ENCODE measurements at regions of chr2 and their contacts with region 1.

Region 1: DNA sequence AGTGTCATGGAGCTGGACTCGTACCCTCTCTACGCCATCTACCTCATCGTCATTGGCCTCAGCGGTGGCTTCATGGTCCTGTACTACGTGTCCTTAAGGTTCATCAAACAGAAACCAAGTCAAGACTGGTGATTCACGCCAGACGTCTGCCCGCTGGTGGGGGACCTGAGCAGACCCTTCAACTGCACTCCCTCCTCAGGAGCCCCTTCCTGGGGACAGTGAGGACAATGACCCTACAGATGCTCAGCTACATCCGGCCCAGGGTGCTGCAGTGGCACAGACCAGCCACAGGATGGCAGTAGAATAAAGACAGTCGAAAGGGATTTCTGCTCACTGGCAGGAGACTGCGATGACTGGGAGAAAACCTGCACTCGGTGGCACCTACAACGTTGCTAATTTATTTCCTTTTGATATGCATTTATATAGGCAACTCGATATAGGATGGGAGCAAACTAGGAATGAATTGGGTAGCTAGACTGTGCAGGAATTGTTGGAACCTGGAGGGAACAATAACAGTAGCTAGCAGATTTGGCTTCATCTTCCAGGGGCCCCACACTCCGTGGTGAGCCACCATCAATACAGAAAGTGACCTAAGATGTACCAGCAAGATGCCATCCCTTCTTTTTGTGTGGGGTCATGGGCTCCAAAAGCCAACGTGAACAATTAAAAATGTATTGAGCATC is 39.2 kb downstream of the ABCG8 start:
- DNase-seq: no peak
- H3K4me3 ChIP-seq: no peak overlapping the region
- CTCF ChIP-seq: peak; percentile 85

Region 2: DNA sequence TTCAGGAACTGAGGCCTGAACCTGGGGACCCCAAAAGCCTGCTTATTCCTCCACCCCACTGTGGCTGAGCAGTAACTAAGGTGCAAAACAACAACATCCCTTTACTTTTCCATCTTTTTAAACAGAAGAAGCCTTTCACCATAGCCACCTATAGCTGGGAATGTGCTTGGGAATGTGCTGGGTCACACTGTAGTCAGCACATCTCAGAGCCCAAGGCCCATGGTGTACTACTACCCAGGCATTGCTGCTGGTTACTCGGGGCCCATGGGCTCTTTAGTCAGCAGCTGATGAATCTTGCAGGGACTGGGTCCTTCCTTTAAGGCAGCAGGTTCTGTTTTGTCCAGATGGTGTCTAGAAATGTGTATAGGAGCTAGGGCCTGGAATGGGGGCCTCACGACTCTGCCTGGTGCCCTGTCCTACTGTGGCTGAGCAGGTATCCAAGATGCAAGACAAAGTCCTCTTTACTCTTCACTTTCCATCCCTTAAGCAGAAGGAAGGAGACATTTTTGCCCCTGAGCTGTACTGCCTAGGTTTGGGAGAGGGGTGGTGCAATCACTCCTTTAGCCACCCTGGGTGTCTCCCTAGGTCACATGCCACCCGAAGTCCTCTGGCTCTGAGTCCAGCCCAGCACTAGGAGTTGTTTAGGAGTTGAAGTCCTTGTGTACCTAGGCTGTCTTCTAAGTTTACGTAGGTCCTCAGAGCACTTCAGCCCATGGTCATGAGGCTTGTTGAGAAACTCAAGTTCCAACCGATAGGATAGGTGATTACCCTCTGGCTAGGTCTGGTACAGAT is 1184.0 kb before region 1 on chr2:
- CTCF ChIA-PET with region 1: no interaction called
- POLR2A ChIA-PET with region 1: no interaction called
- DNase-seq: no peak
- H3K4me3 ChIP-seq: no peak overlapping the region
- CTCF ChIP-seq: no peak

Region 3: DNA sequence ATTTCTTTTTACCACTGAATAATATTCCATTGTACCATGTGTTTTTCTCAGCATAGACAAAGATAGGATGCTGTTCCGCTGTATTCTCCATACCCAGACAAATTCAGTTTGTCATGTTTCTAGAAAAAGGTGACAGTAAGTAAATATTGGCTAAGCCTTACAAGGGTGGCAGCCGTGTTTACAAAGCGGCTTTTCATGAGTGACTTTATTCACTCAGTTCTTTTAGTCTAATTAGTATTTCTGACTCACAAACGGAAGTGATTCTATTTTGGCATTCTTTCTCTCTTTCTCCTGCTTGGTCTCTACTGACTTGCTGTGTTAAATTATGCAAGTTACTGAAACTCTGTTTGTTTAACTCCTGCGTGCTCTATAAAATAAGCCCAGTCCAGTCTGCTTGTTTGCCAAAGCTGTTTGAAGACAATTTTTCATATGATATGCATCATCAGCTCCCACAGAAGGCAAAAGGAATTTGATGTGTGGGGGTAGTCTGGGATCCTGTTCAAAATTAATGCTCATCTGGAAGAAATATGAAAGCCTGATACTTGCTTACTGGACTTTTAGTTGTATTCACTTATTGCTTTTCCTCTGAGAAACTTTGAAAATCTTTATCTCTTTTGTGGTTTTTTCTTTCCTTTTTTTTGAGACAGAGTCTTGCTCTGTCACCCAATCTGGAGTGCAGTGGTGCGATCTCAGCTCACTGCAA is 243.2 kb before region 1 on chr2:
- CTCF ChIA-PET with region 1: no interaction called
- POLR2A ChIA-PET with region 1: no interaction called
- DNase-seq: peak; percentile 90
- H3K4me3 ChIP-seq: no peak overlapping the region
- CTCF ChIP-seq: no peak

Region 4: DNA sequence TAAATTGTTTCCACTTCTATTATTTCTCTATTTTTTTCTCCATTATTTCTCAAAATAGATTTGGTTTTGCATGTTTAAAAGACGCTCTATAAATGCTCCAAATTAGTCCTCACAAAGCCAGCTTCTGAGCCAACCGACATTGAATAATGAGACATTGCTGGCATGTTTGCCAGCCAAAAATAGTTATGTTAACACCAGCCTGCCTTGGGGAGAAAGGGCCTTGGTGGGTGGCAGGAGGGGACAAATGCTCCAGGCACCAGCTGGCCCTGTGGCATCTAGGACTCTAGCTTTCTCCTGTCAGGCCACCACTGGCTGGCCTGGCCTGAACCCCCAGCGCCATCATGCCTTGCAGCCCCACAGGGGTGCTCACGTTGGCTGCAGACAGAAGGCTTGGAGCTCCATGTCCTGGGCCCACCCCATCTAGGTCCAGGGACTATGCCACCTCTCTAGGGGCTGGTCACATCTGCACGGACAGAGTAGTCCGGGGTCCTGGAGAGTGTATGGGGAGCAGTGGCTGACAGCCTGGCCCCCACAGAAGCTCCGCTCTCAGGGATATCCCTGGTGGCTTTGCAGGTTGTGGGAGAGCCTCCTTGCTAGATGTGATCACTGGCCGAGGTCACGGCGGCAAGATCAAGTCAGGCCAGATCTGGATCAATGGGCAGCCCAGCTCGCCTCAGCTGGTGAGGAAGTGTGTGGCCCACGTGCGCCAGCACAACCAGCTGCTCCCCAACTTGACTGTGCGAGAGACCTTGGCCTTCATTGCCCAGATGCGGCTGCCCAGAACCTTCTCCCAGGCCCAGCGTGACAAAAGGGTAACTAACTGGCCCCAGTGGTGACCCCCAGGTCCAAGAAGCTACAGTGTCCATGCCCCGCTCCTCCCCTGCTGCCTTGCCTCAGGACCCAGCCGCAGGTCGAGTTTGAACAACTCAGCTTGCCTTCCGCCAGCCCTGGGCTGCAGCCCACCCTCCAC is 26.6 kb before region 1 on chr2:
- CTCF ChIA-PET with region 1: interaction called, 10 read pairs
- POLR2A ChIA-PET with region 1: no interaction called
- DNase-seq: no peak
- H3K4me3 ChIP-seq: no peak overlapping the region
- CTCF ChIP-seq: no peak

Region 5: GRCh38 chr2:43894743-43895142 is 16.8 kb after region 1 on chr2:
- CTCF ChIA-PET with region 1: interaction called, 13 read pairs
- POLR2A ChIA-PET with region 1: no interaction called
- DNase-seq: no peak
- H3K4me3 ChIP-seq: no peak overlapping the region
- CTCF ChIP-seq: no peak

Region 6: GRCh38 chr2:43958397-43959275 is 80.7 kb after region 1 on chr2:
- CTCF ChIA-PET with region 1: no interaction called
- POLR2A ChIA-PET with region 1: no interaction called
- DNase-seq: no peak
- H3K4me3 ChIP-seq: no peak overlapping the region
- CTCF ChIP-seq: no peak